ENCODE measurements at regions of chr3 and their contacts with region 1.

Region 1: GRCh38 chr3:126267226-126267975 is 87.0 kb upstream of the ALDH1L1 start:
- DNase-seq: peak; percentile 79 to 88
- ATAC-seq: peak; percentile 72 to 81 (median 75)
- H3K4me3 ChIP-seq: peak overlapping the region; percentile 67
- H3K27ac ChIP-seq: peak overlapping the region; percentile 89
- H3K4me1 ChIP-seq: peaks cover 41% of the 10 kb centered on the region
- H3K27me3 ChIP-seq: no peaks in the 10 kb centered on the region
- CTCF ChIP-seq: peak; percentile 16

Region 2: GRCh38 chr3:126197854-126198584 is 69.4 kb before region 1 on chr3:
- intact Hi-C with region 1: no loop called
- DNase-seq: peak; percentile 72 to 80
- ATAC-seq: peak; percentile 97 to 99 (median 98)
- H3K4me3 ChIP-seq: peak overlapping the region; percentile 11
- H3K27ac ChIP-seq: peak overlapping the region; percentile 48
- H3K4me1 ChIP-seq: peaks cover 7% of the 10 kb centered on the region
- H3K27me3 ChIP-seq: no peaks in the 10 kb centered on the region
- CTCF ChIP-seq: peak; percentile 79

Region 3: GRCh38 chr3:126287536-126288241 is 20.3 kb after region 1 on chr3:
- intact Hi-C with region 1: loop called in 1 of 2 experiments (anchors 2 kb)
- DNase-seq: peak; percentile 67 to 87
- ATAC-seq: peak; percentile 85 to 91 (median 88)
- H3K4me3 ChIP-seq: peak overlapping the region; percentile 69
- H3K27ac ChIP-seq: peak overlapping the region; percentile 88
- H3K4me1 ChIP-seq: peaks cover 13% of the 10 kb centered on the region
- H3K27me3 ChIP-seq: no peaks in the 10 kb centered on the region
- CTCF ChIP-seq: no peak

Region 4: GRCh38 chr3:126475413-126476114 is 208.2 kb after region 1 on chr3 and contains the start of gene ZXDC:
- intact Hi-C with region 1: loop called (anchors 5 to 10 kb)
- DNase-seq: peak; percentile 96 to 98
- ATAC-seq: peak; percentile 76 to 90 (median 80)
- H3K4me3 ChIP-seq: peak within 1 kb of the TSS; percentile 87
- H3K27ac ChIP-seq: peak within 1 kb of the TSS; percentile 96
- H3K4me1 ChIP-seq: peaks cover 42% of the 10 kb centered on the region
- H3K27me3 ChIP-seq: no peaks in the 10 kb centered on the region
- CTCF ChIP-seq: peak; percentile 54
- total RNA-seq, gene ZXDC: 30.3 to 39.5 (median 35.9) TPM

Measured in psoas muscle (tissue), 8 donors.